K562 (cell line): ENCODE measurements at regions of chr1 and their contacts with region 1.

Region 1: GRCh38 chr1:167663002-167663772 is 33.2 kb downstream of the RCSD1 start:
- DNase-seq: peak in 2 of 4 experiments; percentile 54 to 63
- ATAC-seq: peak; percentile 67
- H3K4me3 ChIP-seq: no peak overlapping the region
- H3K27ac ChIP-seq: no peak overlapping the region
- H3K4me1 ChIP-seq: peaks cover 20% of the 10 kb centered on the region in 2 experiments
- H3K27me3 ChIP-seq: no peaks in the 10 kb centered on the region
- CTCF ChIP-seq: 0 out of 6 replicates have a peak, but pooled peaks of 1 of the 3 experiments have one; percentile 6
- EP300 ChIP-seq: no peak
- POLR2A ChIP-seq: no peak
- RAD21 ChIP-seq: peak in 1 of 2 experiments; percentile 28; a peak in 1 of 4 replicates

Region 2: DNA sequence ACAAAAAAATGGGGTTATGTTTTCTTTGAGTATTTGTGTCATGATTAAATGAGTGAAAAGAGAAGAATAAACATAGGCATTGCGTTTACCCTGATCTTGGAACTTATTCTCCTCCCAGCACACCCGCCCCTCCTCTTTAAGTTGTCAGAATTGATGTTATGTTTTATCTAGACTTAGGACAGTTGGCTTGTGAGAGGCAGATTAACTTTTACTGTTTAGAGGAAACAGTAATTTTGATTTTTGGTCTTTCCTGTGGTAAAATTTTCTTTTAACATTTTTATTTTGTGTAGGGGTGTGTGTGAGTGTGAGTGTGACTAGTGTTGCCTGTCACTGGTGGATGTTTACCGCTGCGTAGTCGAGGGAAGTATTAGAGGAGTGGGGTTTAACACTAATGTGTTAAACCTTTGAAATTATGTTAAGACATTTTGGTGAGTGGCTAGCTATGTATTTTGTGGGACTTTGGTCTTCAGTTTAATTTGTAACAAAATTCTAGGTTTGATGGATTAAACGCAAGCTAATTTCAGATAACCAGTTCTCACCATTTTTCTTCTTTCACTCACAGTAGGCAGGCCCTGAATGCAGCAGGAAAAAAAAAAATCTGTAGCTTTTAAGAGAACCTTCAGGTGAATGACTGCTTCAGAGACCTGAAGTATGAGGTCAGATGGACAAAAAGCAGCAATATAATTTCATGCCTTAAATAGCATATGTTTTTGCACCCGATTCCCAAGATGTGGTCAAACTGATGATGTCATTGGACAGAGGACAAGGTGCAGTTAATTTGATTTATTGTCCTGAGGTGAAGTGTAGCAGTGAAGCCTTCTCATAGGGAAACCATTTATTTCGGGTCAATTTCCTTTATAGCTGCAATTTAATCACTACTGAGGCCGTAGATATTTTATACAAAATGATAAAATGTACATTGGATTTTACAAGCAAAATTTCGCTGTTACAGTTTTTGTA is 439.8 kb before region 1 on chr1:
- CTCF ChIA-PET with region 1: no interaction called
- POLR2A ChIA-PET with region 1: no interaction called
- in situ Hi-C with region 1: no loop called
- intact Hi-C with region 1: no loop called
- DNase-seq: peak in 2 of 4 experiments; percentile 35 to 78
- ATAC-seq: peak; percentile 7; the same call in 1 of the 3 replicates
- H3K4me3 ChIP-seq: peak overlapping the region; percentile 63; the same call in 1 of the 2 replicates
- H3K27ac ChIP-seq: peak overlapping the region; percentile 92
- H3K4me1 ChIP-seq: peaks cover 20 to 39% of the 10 kb centered on the region in 2 experiments; a peak in 4 of 5 replicates
- H3K27me3 ChIP-seq: no peaks in the 10 kb centered on the region
- CTCF ChIP-seq: no peak
- EP300 ChIP-seq: no peak
- POLR2A ChIP-seq: no peak
- RAD21 ChIP-seq: no peak

Region 3: DNA sequence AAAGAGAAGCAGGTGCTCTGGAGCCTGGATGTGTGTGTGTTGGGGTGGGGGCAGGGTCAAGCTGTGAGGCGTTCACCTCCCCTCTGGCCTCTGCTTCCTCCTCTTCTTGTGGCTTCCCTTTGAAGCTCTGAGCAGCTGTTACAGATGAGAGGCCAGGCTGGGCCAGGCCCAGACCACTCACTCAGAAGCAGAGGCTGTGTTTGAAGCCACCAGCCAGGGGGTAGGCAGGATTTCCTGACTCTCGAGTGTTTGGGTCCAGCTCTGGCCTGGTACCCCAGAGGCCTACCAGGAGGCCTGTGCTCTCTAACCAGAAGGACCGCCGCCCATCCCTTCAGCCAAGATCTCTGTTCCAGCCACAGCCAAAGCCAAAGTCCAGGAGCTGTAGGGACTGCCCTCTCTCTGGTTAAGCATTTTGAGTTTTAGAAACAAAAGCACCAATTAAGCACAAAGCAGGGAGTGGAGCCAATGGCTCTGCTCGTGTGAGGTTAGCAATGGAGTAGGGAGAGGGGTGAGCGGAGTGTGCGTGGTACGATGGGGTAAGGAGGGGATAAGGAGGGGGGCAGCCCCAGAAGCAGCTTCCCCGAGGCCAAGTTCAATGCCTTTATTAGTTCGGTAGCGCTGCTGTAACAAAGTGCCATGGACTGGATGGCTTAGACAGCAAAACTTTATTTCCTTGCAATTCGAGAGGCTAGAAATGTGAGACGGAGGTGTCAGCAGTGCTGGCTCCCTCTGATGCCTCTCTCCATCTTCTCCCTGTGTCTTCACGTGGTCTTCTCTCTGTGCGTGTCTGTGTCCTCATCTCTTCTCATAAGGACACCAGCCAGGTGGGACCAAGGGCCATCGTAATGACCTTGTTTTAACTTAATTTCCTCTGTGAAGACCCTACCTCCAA is 12.7 kb before region 1 on chr1:
- CTCF ChIA-PET with region 1: no interaction called
- POLR2A ChIA-PET with region 1: interaction called, 10 read pairs
- in situ Hi-C with region 1: no loop called
- intact Hi-C with region 1: no loop called
- DNase-seq: no peak
- ATAC-seq: peak; percentile 55
- H3K4me3 ChIP-seq: no peak overlapping the region
- H3K27ac ChIP-seq: no peak overlapping the region
- H3K4me1 ChIP-seq: peaks cover 9 to 10% of the 10 kb centered on the region in 2 experiments; a peak in 4 of 5 replicates
- H3K27me3 ChIP-seq: no peaks in the 10 kb centered on the region
- CTCF ChIP-seq: no peak
- EP300 ChIP-seq: no peak
- POLR2A ChIP-seq: no peak
- RAD21 ChIP-seq: no peak